Sciatic nerve (tissue), 2 donors: ENCODE measurements at regions of chr5 and their contacts with region 1.

Region 1: DNA sequence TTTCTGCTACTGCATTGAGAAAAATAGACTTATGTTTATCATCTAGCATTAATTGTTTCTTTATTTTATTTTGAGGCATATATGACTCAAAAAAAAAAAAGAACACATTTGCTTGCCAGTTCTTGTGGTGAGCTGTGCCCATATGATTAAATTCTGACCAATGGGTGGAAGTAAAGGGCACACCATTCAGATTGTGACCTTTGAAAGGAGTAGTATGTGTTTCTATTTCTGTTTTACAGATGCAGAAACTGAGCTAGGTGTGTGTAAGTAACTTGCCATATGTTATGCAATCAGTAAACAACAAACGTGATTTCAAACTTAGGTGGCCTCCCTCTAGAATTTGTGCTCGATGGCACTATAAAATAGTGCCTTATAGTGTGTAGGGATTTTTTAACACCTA is 368.1 kb upstream of the EDIL3 start:
- DNase-seq: no peak
- ATAC-seq: no peak

Region 2: GRCh38 chr5:85320500-85320899 is 567.7 kb after region 1 on chr5:
- intact Hi-C with region 1: loop called (anchors 5 kb)
- DNase-seq: no peak
- ATAC-seq: no peak

Region 3: GRCh38 chr5:85512896-85513295 is 760.1 kb after region 1 on chr5:
- intact Hi-C with region 1: no loop called
- DNase-seq: no peak
- ATAC-seq: no peak